ENCODE measurements at regions of chr19 and their contacts with region 1.

Region 1: DNA sequence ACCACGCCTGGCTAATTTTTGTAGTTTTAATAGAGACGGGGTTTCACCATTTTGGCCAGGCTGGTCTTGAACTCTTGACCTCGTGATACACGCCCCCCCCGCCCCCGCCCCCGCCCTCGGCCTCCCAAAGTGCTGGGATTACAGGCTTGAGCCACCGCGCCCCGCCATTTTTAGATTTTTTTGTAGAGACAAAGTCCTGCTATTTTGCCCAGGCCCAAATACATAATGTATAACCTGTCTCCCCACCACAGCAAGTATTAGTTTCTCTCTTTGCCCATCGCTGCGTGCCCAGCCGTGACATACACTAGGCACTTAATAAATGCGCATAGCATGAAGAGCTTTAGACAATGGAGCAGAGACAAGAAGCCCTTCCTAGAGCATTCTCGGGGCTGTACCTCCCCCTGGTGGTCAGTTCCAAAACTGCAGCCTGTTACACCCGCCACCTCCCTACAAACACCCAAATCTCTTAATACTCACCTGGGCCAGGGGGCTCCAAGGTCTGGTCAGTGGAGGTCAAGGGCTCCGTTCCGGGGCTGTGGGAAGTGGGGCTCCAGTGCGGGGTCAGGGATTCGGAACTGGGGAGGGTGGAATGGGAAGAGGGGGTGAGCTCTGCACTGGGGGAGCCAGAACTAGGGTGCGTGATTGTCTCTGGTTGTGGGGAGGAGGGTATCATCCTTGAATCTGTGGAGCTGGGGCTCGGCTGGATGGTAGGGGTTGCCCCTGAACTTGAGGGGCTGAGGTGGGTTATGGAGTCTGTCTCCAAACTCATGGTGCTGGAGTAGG is 22.5 kb downstream of the IQCN start:
- DNase-seq: peak; percentile 53 to 70
- ATAC-seq: peak; percentile 78 to 85
- H3K4me3 ChIP-seq: no peak overlapping the region
- H3K27ac ChIP-seq: no peak overlapping the region
- H3K4me1 ChIP-seq: no peaks in the 10 kb centered on the region
- CTCF ChIP-seq: peak; percentile 77
- EP300 ChIP-seq: no peak
- POLR2A ChIP-seq: no peak
- RAD21 ChIP-seq: peak; percentile 88 to 96

Region 2: GRCh38 chr19:18112989-18113478 is 138.7 kb before region 1 on chr19:
- CTCF ChIA-PET with region 1: interaction called, 32 read pairs
- POLR2A ChIA-PET with region 1: no interaction called
- DNase-seq: peak; percentile 71 to 80
- ATAC-seq: peak; percentile 74 to 86
- H3K4me3 ChIP-seq: no peak overlapping the region
- H3K27ac ChIP-seq: no peak overlapping the region
- H3K4me1 ChIP-seq: peaks cover 19% of the 10 kb centered on the region
- CTCF ChIP-seq: peak; percentile 71
- EP300 ChIP-seq: no peak
- POLR2A ChIP-seq: no peak
- RAD21 ChIP-seq: peak; percentile 78 to 87

Region 3: DNA sequence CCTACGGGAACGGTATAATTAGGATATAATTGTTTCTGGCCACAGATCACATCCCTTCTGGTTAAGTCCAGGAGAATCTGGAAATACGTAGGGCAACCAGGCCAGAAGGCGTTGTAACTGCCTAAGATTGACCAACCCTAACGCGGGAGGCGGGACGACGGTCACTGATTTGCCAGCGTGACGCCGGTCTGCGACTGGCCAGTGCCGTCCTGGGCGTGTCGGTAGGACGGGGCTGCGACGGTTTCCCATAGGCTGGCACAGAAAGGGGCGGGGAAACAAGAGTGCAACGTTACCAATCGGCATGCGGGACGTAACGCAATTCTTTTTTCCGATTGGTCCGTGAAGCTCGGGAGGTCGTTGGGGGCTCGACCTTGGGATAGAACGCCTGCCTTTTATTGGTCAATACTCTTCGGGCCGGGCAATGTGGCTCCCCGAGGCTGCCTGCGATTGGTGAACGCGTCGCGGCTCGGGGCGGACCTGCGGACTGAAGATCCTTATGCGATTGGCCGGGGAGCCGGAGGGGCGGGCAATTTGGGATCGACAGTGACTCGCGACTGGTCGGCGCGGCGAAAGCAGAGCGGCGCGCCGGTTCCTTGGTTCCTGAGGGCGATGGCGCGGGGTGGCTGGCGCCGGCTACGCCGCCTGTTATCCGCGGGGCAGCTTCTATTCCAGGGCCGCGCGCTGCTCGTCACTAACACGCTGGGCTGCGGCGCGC is 58.9 kb before region 1 on chr19 and contains the start of gene MPV17L2:
- CTCF ChIA-PET with region 1: interaction called, 60 read pairs
- POLR2A ChIA-PET with region 1: no interaction called
- DNase-seq: peak; percentile 70 to 99
- ATAC-seq: peak; percentile 92 to 94
- H3K4me3 ChIP-seq: peak within 1 kb of the TSS; percentile 65
- H3K27ac ChIP-seq: peak within 1 kb of the TSS; percentile 62 to 87
- H3K4me1 ChIP-seq: peaks cover 14% of the 10 kb centered on the region; the same call in 2 of the 3 replicates
- CTCF ChIP-seq: no peak
- EP300 ChIP-seq: no peak
- POLR2A ChIP-seq: peak; percentile 61
- RAD21 ChIP-seq: no peak
- polyA plus RNA-seq, gene MPV17L2: 8.3 and 11.4 TPM in 2 replicates

Region 4: DNA sequence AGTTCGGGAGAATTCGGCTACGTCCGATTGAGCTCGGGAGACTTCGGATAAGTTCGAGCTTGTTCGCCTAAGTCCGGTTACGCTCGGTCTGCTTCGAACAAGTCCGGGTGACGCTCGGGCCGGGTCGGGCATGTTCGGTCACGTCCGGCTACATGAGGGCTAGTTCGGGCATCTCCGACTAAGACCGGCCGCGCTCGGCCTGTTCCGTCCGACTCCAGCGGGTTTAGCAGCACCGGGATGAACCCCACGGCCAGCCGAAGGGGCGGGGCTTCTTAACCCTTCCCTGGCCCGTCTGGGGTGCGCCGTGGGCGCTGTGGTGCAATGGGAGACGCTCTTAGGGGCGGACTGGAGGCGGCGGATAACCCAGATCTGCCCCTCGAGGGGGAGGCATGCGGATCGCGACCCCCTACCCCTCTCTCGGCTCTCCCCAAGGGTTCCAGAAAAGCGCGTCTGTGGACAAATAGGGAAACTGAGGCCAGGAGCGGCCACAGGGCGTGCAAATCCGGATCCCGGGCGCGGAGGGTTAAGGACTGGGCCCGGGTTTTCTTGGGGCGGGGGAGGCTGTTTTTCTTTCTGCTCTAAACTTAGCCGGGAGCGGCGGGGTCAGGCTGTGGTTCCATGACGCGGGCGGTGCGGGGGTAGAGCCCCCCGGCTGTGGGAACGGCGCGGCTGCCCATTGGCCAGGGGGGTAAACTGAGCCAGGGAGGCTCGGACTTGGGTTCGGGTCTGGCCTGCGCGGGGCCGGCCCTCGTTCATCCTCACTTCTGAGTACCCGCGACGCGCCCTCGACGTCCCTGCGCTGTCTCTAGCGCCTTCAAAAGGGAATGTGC is 27.0 kb before region 1 on chr19:
- CTCF ChIA-PET with region 1: interaction called, 34 read pairs
- POLR2A ChIA-PET with region 1: no interaction called
- DNase-seq: peak; percentile 89 to 99
- ATAC-seq: peak; percentile 92 to 98
- H3K4me3 ChIP-seq: peak overlapping the region; percentile 68
- H3K27ac ChIP-seq: peak overlapping the region; percentile 83 to 86
- H3K4me1 ChIP-seq: peaks cover 5% of the 10 kb centered on the region; the same call in 2 of the 3 replicates
- CTCF ChIP-seq: no peak
- EP300 ChIP-seq: no peak
- POLR2A ChIP-seq: no peak
- RAD21 ChIP-seq: no peak

Region 5: GRCh38 chr19:18239303-18239702 is 12.5 kb before region 1 on chr19:
- CTCF ChIA-PET with region 1: interaction called, 45 read pairs
- POLR2A ChIA-PET with region 1: no interaction called
- DNase-seq: no peak
- ATAC-seq: 0 out of 6 replicates have a peak, but pooled peaks of 1 of the 2 experiments have one; percentile 39
- H3K4me3 ChIP-seq: no peak overlapping the region
- H3K27ac ChIP-seq: no peak overlapping the region
- H3K4me1 ChIP-seq: no peaks in the 10 kb centered on the region
- CTCF ChIP-seq: no peak
- EP300 ChIP-seq: no peak
- POLR2A ChIP-seq: no peak
- RAD21 ChIP-seq: no peak

Region 6: DNA sequence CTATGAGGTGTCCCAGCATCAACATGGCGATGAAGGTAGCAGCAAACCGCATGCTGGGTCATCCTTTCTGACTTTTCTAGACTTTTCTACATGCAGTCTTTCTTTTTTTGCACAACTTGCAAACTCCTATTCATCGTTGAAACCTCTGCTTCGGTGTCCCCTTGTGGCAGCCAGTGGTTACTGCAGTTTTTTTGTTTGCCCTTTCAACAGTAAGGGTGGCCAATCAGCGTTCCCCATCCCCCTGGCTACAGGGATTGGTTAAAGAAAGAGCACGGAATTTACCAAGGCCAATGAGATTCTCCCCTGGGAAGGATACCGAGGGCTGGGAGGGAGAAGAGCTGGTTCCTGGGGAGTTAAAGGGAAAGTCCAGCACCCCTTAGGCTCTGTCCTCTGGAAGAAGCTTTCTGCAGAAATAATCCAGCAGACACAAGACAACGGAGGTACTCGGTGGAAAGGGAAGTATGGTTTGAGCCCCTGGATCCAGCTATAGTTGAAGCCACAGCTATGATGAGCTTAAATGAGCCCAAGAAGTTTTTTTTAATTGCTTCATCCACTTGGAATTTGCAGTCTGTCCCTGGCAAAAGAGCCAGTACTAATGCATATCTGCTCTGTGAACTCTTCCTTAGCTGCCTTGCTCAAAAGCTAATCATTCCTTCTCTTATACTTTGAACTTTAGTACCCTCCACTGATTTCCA is 76.7 kb after region 1 on chr19:
- CTCF ChIA-PET with region 1: interaction called, 14 read pairs
- POLR2A ChIA-PET with region 1: no interaction called
- DNase-seq: peak; percentile 94 to 99
- ATAC-seq: peak; percentile 99
- H3K4me3 ChIP-seq: peak overlapping the region; percentile 30
- H3K27ac ChIP-seq: peak overlapping the region; percentile 67 to 83
- H3K4me1 ChIP-seq: peaks cover 27% of the 10 kb centered on the region
- CTCF ChIP-seq: peak; percentile 67
- EP300 ChIP-seq: no peak
- POLR2A ChIP-seq: peak; percentile 32; the same call in 1 of the 2 replicates
- RAD21 ChIP-seq: peak; percentile 73